ENCODE measurements at regions of chr12 and their contacts with region 1.

Region 1: GRCh38 chr12:57904848-57905811 is 36.2 kb upstream of the ATP23 start:
- DNase-seq: peak; percentile 81
- H3K4me3 ChIP-seq: peak overlapping the region in 1 of 2 experiments; percentile 22; a peak in 1 of 4 replicates
- H3K27ac ChIP-seq: no peak overlapping the region
- H3K4me1 ChIP-seq: peaks cover 0 to 3% of the 10 kb centered on the region in 2 experiments; a peak in 1 of 4 replicates
- H3K27me3 ChIP-seq: no peaks in the 10 kb centered on the region; the same call in 1 of the 2 replicates
- CTCF ChIP-seq: peak; percentile 100
- EP300 ChIP-seq: no peak; a peak in 1 of 4 replicates
- RAD21 ChIP-seq: peak; percentile 100

Region 2: GRCh38 chr12:57803319-57803893 is 101.7 kb before region 1 on chr12:
- CTCF ChIA-PET with region 1: interaction called, 51 read pairs
- POLR2A ChIA-PET with region 1: no interaction called
- DNase-seq: peak; percentile 68
- H3K4me3 ChIP-seq: no peak overlapping the region
- H3K27ac ChIP-seq: no peak overlapping the region
- H3K4me1 ChIP-seq: no peaks in the 10 kb centered on the region; a peak in 1 of 4 replicates
- H3K27me3 ChIP-seq: no peaks in the 10 kb centered on the region
- CTCF ChIP-seq: peak; percentile 79
- EP300 ChIP-seq: no peak
- RAD21 ChIP-seq: peak; percentile 64

Region 3: DNA sequence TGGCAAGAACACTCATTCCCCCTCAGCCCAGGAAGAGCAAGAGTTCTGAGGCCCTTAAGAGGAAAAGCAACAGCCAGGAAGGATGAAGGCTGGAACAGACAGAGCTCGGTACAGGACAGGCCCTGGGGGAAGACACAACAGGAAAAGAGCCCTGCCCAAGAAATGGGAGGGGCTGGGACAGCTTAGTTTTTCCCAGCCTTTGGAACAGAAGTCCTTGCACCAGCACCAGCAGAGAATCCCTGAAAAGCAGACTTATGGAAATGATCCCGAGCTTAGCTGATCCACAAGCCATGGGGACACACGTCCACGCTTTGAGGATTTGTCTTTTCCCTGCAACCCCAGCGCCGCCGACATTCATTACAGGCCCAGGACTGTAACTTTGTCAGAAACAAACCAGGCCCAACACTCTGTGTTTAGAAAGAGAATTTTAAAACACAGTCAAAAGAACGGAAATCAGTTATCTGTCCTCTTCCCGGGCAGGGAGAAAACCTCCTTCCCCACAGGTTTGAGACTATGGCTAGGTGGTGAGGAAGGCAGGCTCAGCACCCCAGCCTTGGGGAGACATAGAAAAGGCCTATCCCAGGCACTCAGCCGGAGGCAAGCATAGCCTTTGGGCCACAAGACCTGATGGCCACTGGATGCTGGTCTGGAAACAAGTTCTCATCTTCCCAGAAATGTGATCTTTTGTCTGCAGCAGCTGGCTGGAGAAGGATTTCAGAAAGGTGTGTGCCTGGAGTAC is 82.6 kb before region 1 on chr12:
- CTCF ChIA-PET with region 1: interaction called, 34 read pairs
- POLR2A ChIA-PET with region 1: no interaction called
- DNase-seq: no peak
- H3K4me3 ChIP-seq: no peak overlapping the region
- H3K27ac ChIP-seq: no peak overlapping the region
- H3K4me1 ChIP-seq: no peaks in the 10 kb centered on the region; a peak in 1 of 4 replicates
- H3K27me3 ChIP-seq: no peaks in the 10 kb centered on the region
- CTCF ChIP-seq: no peak
- EP300 ChIP-seq: no peak
- RAD21 ChIP-seq: no peak

Region 4: GRCh38 chr12:57836442-57837375 is 68.4 kb before region 1 on chr12:
- CTCF ChIA-PET with region 1: interaction called, 146 read pairs
- POLR2A ChIA-PET with region 1: interaction called, 3 read pairs
- DNase-seq: no peak
- H3K4me3 ChIP-seq: peak overlapping the region in 1 of 2 experiments; percentile 30; a peak in 1 of 4 replicates
- H3K27ac ChIP-seq: peak overlapping the region; percentile 67 to 73
- H3K4me1 ChIP-seq: peaks cover 75 to 94% of the 10 kb centered on the region in 2 experiments
- H3K27me3 ChIP-seq: no peaks in the 10 kb centered on the region
- CTCF ChIP-seq: no peak
- EP300 ChIP-seq: peak in 1 of 2 experiments; percentile 36; a peak in 1 of 4 replicates
- RAD21 ChIP-seq: no peak

Region 5: DNA sequence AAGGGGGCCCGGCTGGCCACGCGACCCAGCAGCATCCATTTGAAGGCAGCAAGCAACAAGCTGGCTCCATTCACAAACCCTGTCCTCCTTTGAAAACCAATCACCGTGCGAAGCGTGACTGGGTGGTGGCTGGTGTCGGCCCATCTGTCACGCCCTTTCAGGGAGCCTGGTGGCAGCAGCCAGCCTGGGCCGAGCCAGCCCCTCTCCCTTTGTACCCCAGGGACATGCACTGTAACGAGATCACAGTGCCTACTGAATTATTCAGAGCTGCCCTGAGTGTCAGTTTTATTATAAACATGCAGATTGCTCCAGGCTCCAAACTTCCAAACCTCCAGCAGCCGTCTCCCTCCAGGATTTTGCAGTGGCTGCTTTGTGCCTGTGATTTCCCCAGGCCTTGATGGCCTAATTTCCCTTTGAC is 36.3 kb before region 1 on chr12:
- CTCF ChIA-PET with region 1: interaction called, 14 read pairs
- POLR2A ChIA-PET with region 1: no interaction called
- DNase-seq: peak; percentile 67
- H3K4me3 ChIP-seq: no peak overlapping the region
- H3K27ac ChIP-seq: peak overlapping the region in 1 of 2 experiments; percentile 36; a peak in 1 of 4 replicates
- H3K4me1 ChIP-seq: peaks cover 0 to 19% of the 10 kb centered on the region in 2 experiments; a peak in 1 of 4 replicates
- H3K27me3 ChIP-seq: no peaks in the 10 kb centered on the region
- CTCF ChIP-seq: no peak
- EP300 ChIP-seq: no peak
- RAD21 ChIP-seq: no peak

Region 6: DNA sequence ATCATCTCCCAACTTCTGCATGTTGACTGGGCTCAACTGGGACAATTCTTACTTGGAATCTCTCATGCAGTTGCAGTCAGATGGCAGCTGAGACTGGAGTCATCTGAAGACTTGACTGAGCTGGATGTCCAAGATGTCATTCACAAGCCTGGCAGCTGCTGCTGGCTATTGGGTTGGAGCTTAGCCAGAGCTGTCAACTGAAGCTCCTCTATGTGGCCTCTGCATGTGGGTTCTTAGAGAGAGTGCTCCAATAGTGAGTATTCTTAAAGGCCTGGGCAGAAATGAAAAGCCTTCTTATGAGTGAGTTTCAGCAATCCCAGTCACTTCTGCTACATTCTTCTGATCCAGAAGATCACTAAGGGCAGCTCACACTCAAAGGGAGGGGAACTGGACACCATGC is 574.3 kb after region 1 on chr12:
- CTCF ChIA-PET with region 1: no interaction called
- POLR2A ChIA-PET with region 1: no interaction called
- DNase-seq: no peak
- H3K4me3 ChIP-seq: no peak overlapping the region
- H3K27ac ChIP-seq: no peak overlapping the region
- H3K4me1 ChIP-seq: no peaks in the 10 kb centered on the region
- H3K27me3 ChIP-seq: no peaks in the 10 kb centered on the region
- CTCF ChIP-seq: no peak
- EP300 ChIP-seq: no peak
- RAD21 ChIP-seq: no peak

Measured in SK-N-SH (cell line).